ENCODE measurements at regions of chr7 and their contacts with region 1.

Region 1: GRCh38 chr7:139494835-139495579 is 11.5 kb upstream of the KLRG2 start:
- DNase-seq: no peak
- ATAC-seq: no peak
- H3K4me3 Mint-ChIP-seq: no peak overlapping the region
- H3K27ac Mint-ChIP-seq: no peak overlapping the region
- H3K4me1 Mint-ChIP-seq: 0 out of 2 replicates have a peak, but pooled peaks cover 3% of the 10 kb centered on the region
- H3K27me3 Mint-ChIP-seq: peaks cover 16% of the 10 kb centered on the region
- CTCF ChIP-seq: no peak

Region 2: DNA sequence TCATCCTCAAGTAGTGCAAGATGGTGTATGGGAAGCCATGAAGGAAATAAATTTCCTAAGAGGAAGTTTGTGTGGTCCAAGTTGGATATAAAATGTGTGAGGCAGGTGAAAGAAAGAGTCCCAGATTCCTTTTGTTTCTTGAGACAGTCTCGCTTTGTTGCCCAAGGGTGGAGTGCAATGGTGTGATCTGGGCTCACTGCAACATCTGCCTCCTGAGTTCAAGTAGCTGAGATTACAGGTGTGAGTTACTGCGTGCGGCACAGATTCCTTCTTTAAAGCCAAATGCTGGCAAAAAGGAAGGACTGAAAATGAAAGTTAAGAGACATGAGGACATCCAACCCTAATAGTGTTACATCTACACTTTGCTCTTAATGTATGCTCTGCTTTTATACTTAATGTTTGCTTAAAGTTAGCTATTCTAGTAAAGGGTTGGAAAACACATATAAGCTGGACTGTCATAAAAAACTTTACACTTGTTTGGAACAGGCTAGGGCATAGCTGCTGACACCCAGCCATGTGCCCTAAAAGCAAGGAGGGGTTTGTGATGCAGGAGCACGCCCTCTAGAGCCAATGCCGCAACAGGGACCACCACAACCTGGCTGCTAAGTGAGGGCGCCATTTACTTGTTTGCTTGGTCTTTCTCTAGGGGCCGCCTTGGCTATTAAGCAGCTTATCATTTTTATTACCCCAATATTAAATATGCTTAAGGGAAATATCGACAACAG is 63.0 kb after region 1 on chr7:
- CTCF ChIA-PET with region 1: interaction called, 25 read pairs
- POLR2A ChIA-PET with region 1: interaction called, 3 read pairs
- DNase-seq: peak; percentile 49
- ATAC-seq: peak; percentile 73
- H3K4me3 Mint-ChIP-seq: no peak overlapping the region
- H3K27ac Mint-ChIP-seq: no peak overlapping the region
- H3K4me1 Mint-ChIP-seq: peaks cover 18% of the 10 kb centered on the region
- H3K27me3 Mint-ChIP-seq: no peaks in the 10 kb centered on the region; the same call in 1 of the 2 replicates
- CTCF ChIP-seq: no peak

Region 3: DNA sequence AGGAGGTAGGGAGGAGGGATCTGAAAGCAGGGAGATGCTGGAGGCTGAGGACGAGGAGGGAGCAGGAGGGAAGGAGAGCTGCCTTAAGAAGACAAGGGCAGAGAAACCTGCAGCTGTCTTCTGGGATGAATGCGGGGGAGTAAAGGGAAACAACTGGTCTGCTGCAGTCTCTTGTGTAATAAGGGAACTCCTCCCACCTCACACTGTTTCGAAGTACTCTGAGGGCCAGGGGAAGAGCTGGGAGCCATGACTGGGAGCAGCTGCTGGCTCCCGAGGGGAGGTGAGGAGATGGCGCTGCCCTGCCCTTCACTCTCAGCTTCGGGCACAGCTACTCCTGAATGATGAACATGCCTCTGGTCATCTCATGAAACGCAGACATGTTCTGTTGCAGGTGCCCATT is 93.6 kb after region 1 on chr7:
- CTCF ChIA-PET with region 1: interaction called, 14 read pairs
- POLR2A ChIA-PET with region 1: no interaction called
- DNase-seq: no peak
- ATAC-seq: peak; percentile 63
- H3K4me3 Mint-ChIP-seq: no peak overlapping the region
- H3K27ac Mint-ChIP-seq: no peak overlapping the region
- H3K4me1 Mint-ChIP-seq: peaks cover 3% of the 10 kb centered on the region; the same call in 1 of the 2 replicates
- H3K27me3 Mint-ChIP-seq: no peaks in the 10 kb centered on the region
- CTCF ChIP-seq: no peak

Region 4: GRCh38 chr7:139994356-139994755 is 499.3 kb after region 1 on chr7:
- CTCF ChIA-PET with region 1: no interaction called
- POLR2A ChIA-PET with region 1: no interaction called
- DNase-seq: no peak
- ATAC-seq: no peak
- H3K4me3 Mint-ChIP-seq: no peak overlapping the region
- H3K27ac Mint-ChIP-seq: no peak overlapping the region
- H3K4me1 Mint-ChIP-seq: peaks cover 14% of the 10 kb centered on the region
- H3K27me3 Mint-ChIP-seq: no peaks in the 10 kb centered on the region; the same call in 1 of the 2 replicates
- CTCF ChIP-seq: no peak